AG04449 (cell line): ENCODE measurements at regions of chr3 and their contacts with region 1.

Region 1: GRCh38 chr3:149812606-149813366 is at the start of gene RNF13:
- DNase-seq: peak; percentile 78
- H3K4me3 ChIP-seq: peak within 1 kb of the TSS; percentile 79
- CTCF ChIP-seq: no peak

Region 2: DNA sequence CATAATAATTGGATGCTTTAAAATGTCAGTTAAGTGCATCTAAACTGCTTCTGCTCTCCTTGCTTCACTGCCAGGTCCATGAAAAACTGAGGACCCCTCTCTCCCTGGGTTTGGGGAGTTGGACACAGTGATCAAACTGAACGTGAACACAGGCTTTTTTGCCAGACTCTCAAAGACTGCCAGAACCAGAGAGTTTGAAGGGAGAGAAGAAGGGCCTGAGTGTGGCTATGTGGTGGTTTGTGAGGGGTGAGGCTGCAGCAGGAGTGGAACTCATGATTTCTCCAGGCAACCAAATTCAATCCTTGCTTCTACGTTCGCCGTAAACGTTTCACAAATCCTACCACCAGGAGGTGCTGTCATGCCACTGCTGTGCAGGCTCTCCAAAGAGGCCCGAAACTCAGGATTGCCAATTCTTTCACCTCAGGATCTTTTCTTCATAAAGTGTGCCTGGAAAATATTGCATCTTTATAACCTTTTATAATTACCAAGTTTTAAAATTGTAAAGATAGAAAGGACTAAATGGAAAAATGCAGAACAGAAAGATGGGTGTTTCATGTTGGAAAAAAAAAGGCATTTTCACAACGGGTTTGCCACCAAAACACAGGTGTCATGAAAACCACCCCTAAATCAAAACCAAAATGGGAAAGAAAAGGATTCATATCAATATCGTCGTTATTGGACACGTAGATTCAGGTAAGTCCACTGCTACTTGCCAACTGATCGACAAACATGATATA is 318.6 kb before region 1 on chr3:
- CTCF ChIA-PET with region 1: interaction called, 35 read pairs
- POLR2A ChIA-PET with region 1: no interaction called
- DNase-seq: no peak
- H3K4me3 ChIP-seq: no peak overlapping the region
- CTCF ChIP-seq: peak; percentile 83

Region 3: GRCh38 chr3:149717391-149718056 is 95.3 kb before region 1 on chr3:
- CTCF ChIA-PET with region 1: interaction called, 13 read pairs
- POLR2A ChIA-PET with region 1: no interaction called
- DNase-seq: peak; percentile 37
- H3K4me3 ChIP-seq: no peak overlapping the region
- CTCF ChIP-seq: peak; percentile 60

Region 4: DNA sequence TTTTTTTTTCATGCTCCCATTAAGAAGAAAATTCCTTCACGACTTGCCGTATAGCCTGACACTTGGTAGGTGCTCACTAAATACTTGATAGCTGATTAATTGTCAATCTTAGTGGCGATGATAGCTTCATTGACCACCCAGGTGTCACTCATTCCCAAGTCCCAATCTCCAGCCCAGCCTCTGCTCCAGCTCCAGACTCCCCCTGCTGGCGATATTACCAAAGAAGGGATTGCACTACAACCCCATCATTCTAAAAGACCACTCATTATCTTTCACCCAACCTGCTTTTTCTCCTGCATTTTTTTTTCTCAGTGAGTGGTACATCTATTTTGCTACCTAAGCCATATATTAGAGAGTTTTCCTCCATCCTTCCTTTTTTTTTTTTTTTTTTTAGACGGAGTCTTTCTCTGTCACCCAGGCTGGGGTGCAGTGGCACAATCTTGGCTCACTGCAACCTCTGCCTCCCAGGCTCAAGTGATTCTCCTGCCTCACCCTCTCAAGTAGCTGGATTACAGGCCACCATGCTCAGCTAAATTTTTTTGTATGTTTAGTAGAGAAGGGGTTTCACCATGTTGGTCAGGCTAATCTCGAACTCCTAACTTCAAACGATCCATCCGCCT is 41.0 kb before region 1 on chr3:
- CTCF ChIA-PET with region 1: interaction called, 369 read pairs
- POLR2A ChIA-PET with region 1: no interaction called
- DNase-seq: no peak
- H3K4me3 ChIP-seq: no peak overlapping the region
- CTCF ChIP-seq: peak; percentile 72

Region 5: GRCh38 chr3:149796026-149796425 is 16.8 kb before region 1 on chr3:
- CTCF ChIA-PET with region 1: interaction called, 27 read pairs
- POLR2A ChIA-PET with region 1: no interaction called
- DNase-seq: no peak
- H3K4me3 ChIP-seq: no peak overlapping the region
- CTCF ChIP-seq: no peak

Region 6: DNA sequence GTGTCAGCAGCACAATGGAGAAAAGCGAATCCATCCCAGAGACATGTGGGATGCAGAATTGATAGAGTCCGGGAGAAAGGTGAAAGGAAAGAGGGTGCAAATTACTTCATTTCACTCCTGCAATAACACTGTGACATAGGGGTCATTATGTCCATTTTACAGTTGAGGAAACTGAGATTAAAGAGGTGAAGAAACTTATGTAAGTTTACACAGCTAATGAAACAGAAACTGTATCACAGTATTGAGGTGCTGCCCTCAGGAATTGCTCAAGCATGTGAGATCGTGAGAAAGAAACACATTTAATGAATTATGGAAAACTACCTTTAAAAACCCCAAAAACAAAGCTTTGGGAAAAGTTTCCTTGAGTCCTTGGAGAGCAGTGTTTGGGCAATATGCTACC is 261.5 kb after region 1 on chr3:
- CTCF ChIA-PET with region 1: no interaction called
- POLR2A ChIA-PET with region 1: no interaction called
- DNase-seq: no peak
- H3K4me3 ChIP-seq: peak overlapping the region; percentile 2
- CTCF ChIP-seq: no peak

Region 7: DNA sequence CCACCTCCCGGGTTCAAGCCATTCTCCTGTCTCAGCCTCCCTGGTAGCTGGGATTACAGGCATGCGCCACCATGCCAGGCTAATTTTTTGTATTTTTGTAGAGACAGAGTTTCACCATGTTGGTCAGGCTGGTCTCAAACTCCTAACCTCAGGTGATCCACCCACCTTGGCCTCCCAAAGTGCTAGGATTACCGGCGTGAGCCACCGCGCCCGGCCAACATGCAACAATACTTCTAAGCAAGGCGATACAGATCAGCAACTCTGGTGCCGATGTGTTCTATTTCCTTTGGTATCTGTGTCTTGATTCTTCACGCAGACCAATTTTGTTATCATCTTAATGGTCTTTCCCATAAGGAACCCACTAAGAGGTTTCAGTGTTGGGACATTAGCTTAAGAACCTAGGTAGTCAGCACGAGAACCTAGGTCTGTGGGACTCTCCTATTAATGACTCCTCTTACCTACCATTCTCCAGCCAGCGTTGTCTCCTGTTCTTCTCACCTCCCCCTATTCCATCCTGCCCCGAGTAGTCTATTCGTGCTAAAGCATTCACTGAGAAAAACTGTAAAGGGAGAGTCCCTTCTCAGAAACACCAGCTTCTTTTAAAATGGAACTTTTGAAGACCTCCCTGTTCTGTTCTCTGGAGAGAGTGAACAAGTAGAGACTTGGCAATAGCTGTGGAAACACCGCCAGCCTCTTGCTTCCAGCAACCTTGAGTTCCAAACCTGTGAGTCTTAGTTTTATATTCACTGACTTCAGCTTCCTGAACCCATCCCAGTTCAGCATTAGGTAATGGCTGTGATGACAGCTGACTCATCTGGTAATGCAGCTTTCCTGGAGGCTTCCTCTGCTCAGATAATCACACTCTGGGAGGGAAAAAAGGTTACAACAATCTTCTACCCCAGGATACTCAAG is 656.5 kb after region 1 on chr3:
- CTCF ChIA-PET with region 1: no interaction called
- POLR2A ChIA-PET with region 1: no interaction called
- DNase-seq: peak; percentile 88
- H3K4me3 ChIP-seq: no peak overlapping the region
- CTCF ChIP-seq: no peak